ENCODE measurements at regions of chr17 and their contacts with region 1.

Region 1: GRCh38 chr17:30093463-30094147 is 23.0 kb upstream of the NSRP1 start:
- DNase-seq: no peak
- ATAC-seq: peak; percentile 68
- H3K4me3 Mint-ChIP-seq: no peak overlapping the region
- H3K27ac Mint-ChIP-seq: no peak overlapping the region
- H3K4me1 Mint-ChIP-seq: peaks cover 10% of the 10 kb centered on the region
- H3K27me3 Mint-ChIP-seq: peaks cover 21% of the 10 kb centered on the region
- CTCF ChIP-seq: peak; percentile 64

Region 2: DNA sequence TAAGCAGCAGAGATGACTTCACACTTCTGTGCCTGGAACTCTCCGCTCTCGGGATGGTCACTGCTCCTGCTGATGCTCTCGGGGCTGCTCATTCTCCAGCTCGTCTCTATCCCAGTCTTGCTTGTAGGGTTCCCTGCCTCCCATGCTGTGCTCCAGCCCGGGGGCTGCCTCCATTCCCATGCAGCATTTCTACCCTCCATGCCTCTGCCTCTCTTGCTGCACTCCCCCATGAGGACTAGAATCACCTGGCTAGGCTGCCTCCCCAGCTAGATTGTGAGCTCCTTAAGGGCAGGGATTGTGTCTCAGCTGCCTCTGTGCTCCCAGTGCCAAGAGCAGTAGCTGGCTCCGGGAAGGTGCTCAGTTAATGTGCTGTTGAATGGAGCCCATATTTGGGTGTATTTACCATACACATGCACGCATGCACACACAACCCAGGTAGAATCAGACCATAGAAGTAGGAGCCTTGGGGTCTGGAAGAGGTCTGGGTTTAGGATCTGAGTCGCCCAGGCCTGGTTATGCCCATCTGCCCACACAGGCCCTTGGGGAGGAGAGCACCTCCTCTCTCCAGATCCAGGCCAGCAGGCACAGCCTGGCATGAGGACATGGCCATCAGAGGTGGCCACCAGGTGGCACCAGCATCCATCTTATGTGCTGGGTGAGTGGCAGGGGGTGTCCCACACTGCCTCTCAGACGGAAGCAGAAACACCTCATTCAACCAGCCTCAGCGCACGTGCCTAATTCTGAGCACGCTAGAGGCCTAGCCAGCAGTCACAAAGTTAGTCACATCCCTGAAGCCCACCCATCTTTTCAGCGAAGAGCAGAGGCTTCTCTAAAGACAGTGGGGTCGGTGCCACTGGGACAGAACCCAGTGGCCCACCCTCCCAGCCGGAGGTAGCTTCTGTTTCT is 513.5 kb before region 1 on chr17:
- CTCF ChIA-PET with region 1: no interaction called
- POLR2A ChIA-PET with region 1: interaction called, 3 read pairs
- intact Hi-C with region 1: loop called (anchors 1 kb)
- DNase-seq: peak; percentile 82
- ATAC-seq: peak; percentile 98
- H3K4me3 Mint-ChIP-seq: no peak overlapping the region
- H3K27ac Mint-ChIP-seq: peak overlapping the region; percentile 71
- H3K4me1 Mint-ChIP-seq: peaks cover 27% of the 10 kb centered on the region
- H3K27me3 Mint-ChIP-seq: no peaks in the 10 kb centered on the region
- CTCF ChIP-seq: no peak

Region 3: GRCh38 chr17:30021708-30022317 is 71.8 kb before region 1 on chr17:
- CTCF ChIA-PET with region 1: interaction called, 41 read pairs
- POLR2A ChIA-PET with region 1: no interaction called
- intact Hi-C with region 1: loop called (anchors 1 kb)
- DNase-seq: no peak
- ATAC-seq: peak; percentile 66
- H3K4me3 Mint-ChIP-seq: no peak overlapping the region
- H3K27ac Mint-ChIP-seq: no peak overlapping the region
- H3K4me1 Mint-ChIP-seq: no peaks in the 10 kb centered on the region
- H3K27me3 Mint-ChIP-seq: no peaks in the 10 kb centered on the region
- CTCF ChIP-seq: peak; percentile 83

Region 4: GRCh38 chr17:30031214-30031869 is 62.3 kb before region 1 on chr17:
- CTCF ChIA-PET with region 1: interaction called, 41 read pairs
- POLR2A ChIA-PET with region 1: no interaction called
- intact Hi-C with region 1: loop called (anchors 1 kb)
- DNase-seq: no peak
- ATAC-seq: peak; percentile 60
- H3K4me3 Mint-ChIP-seq: no peak overlapping the region
- H3K27ac Mint-ChIP-seq: no peak overlapping the region
- H3K4me1 Mint-ChIP-seq: peaks cover 1% of the 10 kb centered on the region
- H3K27me3 Mint-ChIP-seq: no peaks in the 10 kb centered on the region
- CTCF ChIP-seq: no peak

Region 5: DNA sequence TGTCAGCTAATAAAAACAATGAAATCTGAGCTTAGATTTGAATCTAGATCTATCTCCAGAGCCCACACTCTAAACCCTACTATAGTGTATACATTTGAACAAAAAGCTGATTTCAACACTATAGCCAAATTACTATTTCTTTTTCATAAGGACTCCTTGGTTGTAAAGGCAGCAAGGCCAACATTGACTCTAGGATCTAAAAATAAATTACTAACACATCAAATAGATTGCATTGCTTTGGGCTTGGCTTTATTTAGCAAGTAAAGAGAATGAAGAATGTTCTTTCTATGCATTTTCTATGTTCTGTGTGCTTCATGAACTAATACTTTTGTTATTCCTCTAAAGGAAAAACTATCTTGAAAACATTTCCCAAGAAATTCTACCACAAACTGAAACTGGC is 388.9 kb after region 1 on chr17:
- CTCF ChIA-PET with region 1: no interaction called
- POLR2A ChIA-PET with region 1: no interaction called
- intact Hi-C with region 1: no loop called
- DNase-seq: no peak
- ATAC-seq: no peak
- H3K4me3 Mint-ChIP-seq: no peak overlapping the region
- H3K27ac Mint-ChIP-seq: no peak overlapping the region
- H3K4me1 Mint-ChIP-seq: peaks cover 17% of the 10 kb centered on the region
- H3K27me3 Mint-ChIP-seq: no peaks in the 10 kb centered on the region
- CTCF ChIP-seq: no peak

Measured in activated B cell treated with CpG ODN at 0.5 μM for 24 hours (primary cell).